Panc1 (cell line): ENCODE measurements at regions of chr5 and their contacts with region 1.

Region 1: DNA sequence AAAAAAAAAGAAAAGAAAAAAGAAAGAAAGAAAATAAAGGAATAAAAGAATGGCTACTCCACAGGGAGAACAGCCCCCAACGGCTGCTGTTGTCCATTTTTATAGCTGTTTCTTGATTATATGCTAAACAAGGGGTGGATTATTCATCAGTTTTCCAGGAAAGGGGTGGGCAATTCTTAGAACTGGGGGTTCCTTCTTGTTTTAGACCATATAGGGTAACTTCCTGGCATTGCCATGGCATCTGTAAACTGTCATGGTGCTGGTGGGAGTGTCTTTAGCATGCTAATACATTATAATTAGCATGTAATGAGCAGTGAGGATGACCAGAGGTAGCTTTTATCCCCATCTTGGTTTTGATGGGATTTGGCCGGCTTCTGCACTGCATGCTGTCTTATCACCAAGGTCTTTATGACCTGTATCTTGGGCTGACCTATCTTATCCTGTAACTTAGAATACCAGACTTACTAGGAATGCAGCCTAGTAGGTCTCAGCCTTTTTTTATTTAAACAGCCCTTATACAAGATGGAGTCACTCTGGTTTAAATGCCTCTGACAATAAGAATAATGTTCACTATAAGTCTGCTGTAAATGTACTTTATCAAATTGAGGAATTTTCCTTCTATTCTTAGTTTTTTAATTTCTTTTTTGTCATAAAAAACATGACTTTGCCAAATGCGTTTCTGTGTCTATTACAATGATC is 28.6 kb downstream of the TRIM7 start:
- DNase-seq: no peak
- ATAC-seq: no peak
- H3K4me3 ChIP-seq: no peak overlapping the region
- H3K27ac ChIP-seq: no peak overlapping the region
- H3K4me1 ChIP-seq: peaks cover 7% of the 10 kb centered on the region
- H3K27me3 ChIP-seq: no peaks in the 10 kb centered on the region
- CTCF ChIP-seq: no peak

Region 2: DNA sequence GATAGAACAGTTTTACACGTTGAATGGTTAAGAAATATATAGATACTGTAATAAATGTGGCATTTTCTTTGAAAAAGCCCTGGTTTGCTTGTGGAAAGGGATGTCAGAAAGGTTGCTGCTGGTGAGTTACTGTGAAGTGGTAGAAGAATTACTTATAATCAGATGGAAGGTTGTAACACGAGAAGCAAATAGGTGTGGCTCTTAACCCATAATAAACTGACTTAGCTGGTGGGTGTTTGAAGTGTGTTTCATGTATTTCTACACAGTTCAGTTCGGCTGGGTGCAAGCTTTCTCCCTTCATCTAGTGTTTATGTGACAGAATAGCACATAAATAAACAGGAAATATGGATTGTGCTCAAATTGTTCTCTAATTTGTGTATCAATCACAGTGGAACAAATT is 676.7 kb before region 1 on chr5:
- CTCF ChIA-PET with region 1: no interaction called
- POLR2A ChIA-PET with region 1: no interaction called
- in situ Hi-C with region 1: no loop called
- intact Hi-C with region 1: no loop called
- DNase-seq: no peak
- ATAC-seq: no peak
- H3K4me3 ChIP-seq: no peak overlapping the region
- H3K27ac ChIP-seq: no peak overlapping the region
- H3K4me1 ChIP-seq: peaks cover 12% of the 10 kb centered on the region
- H3K27me3 ChIP-seq: no peaks in the 10 kb centered on the region
- CTCF ChIP-seq: no peak

Region 3: GRCh38 chr5:180718810-180719453 is 457.5 kb before region 1 on chr5:
- CTCF ChIA-PET with region 1: interaction called, 16 read pairs
- POLR2A ChIA-PET with region 1: no interaction called
- in situ Hi-C with region 1: no loop called
- intact Hi-C with region 1: no loop called
- DNase-seq: peak; percentile 36
- ATAC-seq: no peak; the same call in 1 of the 2 replicates
- H3K4me3 ChIP-seq: no peak overlapping the region
- H3K27ac ChIP-seq: no peak overlapping the region
- H3K4me1 ChIP-seq: no peaks in the 10 kb centered on the region
- H3K27me3 ChIP-seq: peaks cover 31% of the 10 kb centered on the region
- CTCF ChIP-seq: peak; percentile 82